ENCODE measurements at regions of chr18 and their contacts with region 1.

Region 1: GRCh38 chr18:58761241-58761969 is 90.1 kb downstream of the MALT1 start:
- DNase-seq: peak; percentile 84
- ATAC-seq: peak; percentile 83
- H3K4me3 ChIP-seq: no peak overlapping the region
- H3K27ac ChIP-seq: peak overlapping the region; percentile 78
- H3K4me1 ChIP-seq: peaks cover 24% of the 10 kb centered on the region
- H3K27me3 ChIP-seq: no peaks in the 10 kb centered on the region; a peak in 2 of 4 replicates
- CTCF ChIP-seq: no peak
- EP300 ChIP-seq: peak; percentile 35 to 62; a peak in 3 of 4 replicates
- POLR2A ChIP-seq: no peak
- RAD21 ChIP-seq: peak; percentile 27; the same call in 1 of the 2 replicates

Region 2: GRCh38 chr18:58180738-58181353 is 580.6 kb before region 1 on chr18:
- CTCF ChIA-PET with region 1: interaction called, 12 read pairs
- POLR2A ChIA-PET with region 1: no interaction called
- RAD21 ChIA-PET with region 1: interaction called, 4 read pairs
- SMC1A ChIA-PET with region 1: interaction called, 12 read pairs
- in situ Hi-C with region 1: no loop called
- intact Hi-C with region 1: loop called (anchors 10 kb)
- DNase-seq: no peak
- ATAC-seq: peak; percentile 86
- H3K4me3 ChIP-seq: no peak overlapping the region
- H3K27ac ChIP-seq: no peak overlapping the region
- H3K4me1 ChIP-seq: no peaks in the 10 kb centered on the region
- H3K27me3 ChIP-seq: no peaks in the 10 kb centered on the region
- CTCF ChIP-seq: peak; percentile 78 to 87 (median 78)
- EP300 ChIP-seq: no peak
- POLR2A ChIP-seq: no peak
- RAD21 ChIP-seq: peak; percentile 79

Region 3: GRCh38 chr18:58493516-58494253 is 267.7 kb before region 1 on chr18:
- CTCF ChIA-PET with region 1: interaction called, 93 read pairs
- POLR2A ChIA-PET with region 1: no interaction called
- RAD21 ChIA-PET with region 1: interaction called, 38 read pairs
- SMC1A ChIA-PET with region 1: interaction called, 57 read pairs
- in situ Hi-C with region 1: no loop called
- intact Hi-C with region 1: loop called (anchors 1 kb)
- DNase-seq: peak; percentile 28
- ATAC-seq: peak; percentile 94
- H3K4me3 ChIP-seq: no peak overlapping the region
- H3K27ac ChIP-seq: no peak overlapping the region
- H3K4me1 ChIP-seq: peaks cover 13% of the 10 kb centered on the region
- H3K27me3 ChIP-seq: no peaks in the 10 kb centered on the region
- CTCF ChIP-seq: peak; percentile 75 to 90 (median 85)
- EP300 ChIP-seq: no peak
- POLR2A ChIP-seq: no peak
- RAD21 ChIP-seq: peak; percentile 81

Region 4: GRCh38 chr18:58520969-58521368 is 240.4 kb before region 1 on chr18:
- CTCF ChIA-PET with region 1: interaction called, 743 read pairs
- POLR2A ChIA-PET with region 1: interaction called, 8 read pairs
- RAD21 ChIA-PET with region 1: interaction called, 522 read pairs
- SMC1A ChIA-PET with region 1: interaction called, 629 read pairs
- in situ Hi-C with region 1: no loop called
- intact Hi-C with region 1: no loop called
- DNase-seq: no peak
- ATAC-seq: peak; percentile 73
- H3K4me3 ChIP-seq: no peak overlapping the region
- H3K27ac ChIP-seq: no peak overlapping the region
- H3K4me1 ChIP-seq: peaks cover 16% of the 10 kb centered on the region
- H3K27me3 ChIP-seq: no peaks in the 10 kb centered on the region
- CTCF ChIP-seq: no peak
- EP300 ChIP-seq: no peak
- POLR2A ChIP-seq: no peak
- RAD21 ChIP-seq: no peak

Region 5: DNA sequence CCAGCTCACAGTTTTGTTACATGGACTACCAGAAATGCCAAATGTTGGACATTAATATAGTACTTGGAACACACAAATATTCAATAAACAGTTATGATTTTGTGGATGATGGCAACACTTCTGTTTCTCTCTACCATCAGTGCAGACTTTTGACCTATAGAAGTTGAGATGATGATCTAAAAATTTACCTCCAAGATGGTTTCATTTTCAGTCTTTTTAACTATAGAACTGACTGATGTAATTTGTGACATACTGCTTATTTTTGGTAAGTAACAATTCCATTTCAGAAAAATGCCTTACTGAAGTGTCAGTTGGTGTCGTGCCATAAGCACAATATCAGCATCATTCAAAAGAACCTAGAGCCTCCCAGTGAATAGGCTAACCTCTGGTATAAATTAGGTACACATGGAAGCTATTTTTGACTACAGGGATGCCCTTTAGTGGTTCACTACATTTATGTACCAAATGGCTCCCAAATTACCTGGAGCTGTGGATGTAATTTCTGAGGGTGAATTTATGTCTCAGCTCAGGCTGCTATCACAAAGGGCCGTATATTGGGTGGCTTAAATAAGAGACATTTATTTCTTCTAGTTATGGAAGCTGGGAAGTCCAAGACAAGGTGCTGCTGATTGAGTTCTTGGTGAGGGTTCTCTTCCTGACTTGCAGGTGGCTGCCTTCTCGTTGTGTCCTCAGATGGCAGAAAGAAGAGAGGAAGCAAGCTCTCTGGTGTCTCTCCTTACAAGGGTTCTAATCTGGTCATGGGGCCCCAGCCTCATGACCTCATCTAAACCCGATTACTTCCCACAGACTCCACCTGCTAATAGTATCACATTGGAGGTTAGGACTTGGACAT is 199.0 kb before region 1 on chr18:
- CTCF ChIA-PET with region 1: interaction called, 11 read pairs
- POLR2A ChIA-PET with region 1: interaction called, 3 read pairs
- RAD21 ChIA-PET with region 1: interaction called, 6 read pairs
- SMC1A ChIA-PET with region 1: interaction called, 17 read pairs
- in situ Hi-C with region 1: no loop called
- intact Hi-C with region 1: no loop called
- DNase-seq: no peak
- ATAC-seq: peak; percentile 57
- H3K4me3 ChIP-seq: no peak overlapping the region
- H3K27ac ChIP-seq: peak overlapping the region; percentile 83
- H3K4me1 ChIP-seq: peaks cover 60% of the 10 kb centered on the region
- H3K27me3 ChIP-seq: no peaks in the 10 kb centered on the region
- CTCF ChIP-seq: no peak
- EP300 ChIP-seq: no peak
- POLR2A ChIP-seq: peak; percentile 35; the same call in 1 of the 2 replicates
- RAD21 ChIP-seq: no peak

Region 6: DNA sequence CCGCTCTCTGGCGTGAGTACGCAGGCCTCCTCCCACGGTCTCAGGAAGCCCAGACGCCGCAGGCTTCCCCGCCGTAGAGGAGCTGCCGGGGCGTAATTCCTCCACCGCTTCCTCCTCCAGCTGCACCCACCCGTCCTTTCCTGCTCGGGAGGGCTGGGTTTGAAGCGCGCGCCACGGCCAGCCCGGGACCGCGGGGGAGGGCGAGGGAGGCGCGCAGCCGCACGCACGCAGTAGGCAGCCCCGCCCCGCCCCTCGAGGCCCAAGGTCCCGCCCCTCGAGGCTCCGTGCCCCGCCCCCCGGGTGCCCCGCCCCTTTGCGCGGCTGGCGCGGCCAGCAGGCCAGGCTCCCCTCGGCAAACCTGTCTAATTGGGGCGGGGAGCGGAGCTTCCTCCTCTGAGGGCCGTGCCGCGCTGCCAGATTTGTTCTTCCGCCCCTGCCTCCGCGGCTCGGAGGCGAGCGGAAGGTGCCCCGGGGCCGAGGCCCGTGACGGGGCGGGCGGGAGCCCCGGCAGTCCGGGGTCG is 90.2 kb before region 1 on chr18 and contains the start of gene MALT1:
- CTCF ChIA-PET with region 1: interaction called, 17 read pairs
- POLR2A ChIA-PET with region 1: interaction called, 4 read pairs
- RAD21 ChIA-PET with region 1: interaction called, 4 read pairs
- SMC1A ChIA-PET with region 1: interaction called, 19 read pairs
- in situ Hi-C with region 1: no loop called
- intact Hi-C with region 1: no loop called
- DNase-seq: peak; percentile 75
- ATAC-seq: peak; percentile 78
- H3K4me3 ChIP-seq: peak within 1 kb of the TSS; percentile 95
- H3K27ac ChIP-seq: peak within 1 kb of the TSS; percentile 93
- H3K4me1 ChIP-seq: peaks cover 16% of the 10 kb centered on the region; the same call in 1 of the 2 replicates
- H3K27me3 ChIP-seq: no peaks in the 10 kb centered on the region
- CTCF ChIP-seq: no peak
- EP300 ChIP-seq: peak in 1 of 2 experiments; percentile 17; a peak in 1 of 4 replicates
- POLR2A ChIP-seq: peak; percentile 96
- RAD21 ChIP-seq: no peak; the same call in 1 of the 2 replicates
- polyA plus RNA-seq, gene MALT1: 17.6 to 32.5 TPM

Region 7: GRCh38 chr18:58716060-58716756 is 45.2 kb before region 1 on chr18:
- CTCF ChIA-PET with region 1: interaction called, 5 read pairs
- POLR2A ChIA-PET with region 1: no interaction called
- RAD21 ChIA-PET with region 1: interaction called, 11 read pairs
- SMC1A ChIA-PET with region 1: interaction called, 4 read pairs
- in situ Hi-C with region 1: no loop called
- intact Hi-C with region 1: no loop called
- DNase-seq: no peak
- ATAC-seq: peak; percentile 78
- H3K4me3 ChIP-seq: no peak overlapping the region
- H3K27ac ChIP-seq: peak overlapping the region; percentile 41; the same call in 1 of the 2 replicates
- H3K4me1 ChIP-seq: peaks cover 9% of the 10 kb centered on the region; the same call in 1 of the 2 replicates
- H3K27me3 ChIP-seq: no peaks in the 10 kb centered on the region
- CTCF ChIP-seq: no peak
- EP300 ChIP-seq: no peak
- POLR2A ChIP-seq: no peak
- RAD21 ChIP-seq: no peak